ENCODE measurements at regions of chr7 and their contacts with region 1.

Region 1: DNA sequence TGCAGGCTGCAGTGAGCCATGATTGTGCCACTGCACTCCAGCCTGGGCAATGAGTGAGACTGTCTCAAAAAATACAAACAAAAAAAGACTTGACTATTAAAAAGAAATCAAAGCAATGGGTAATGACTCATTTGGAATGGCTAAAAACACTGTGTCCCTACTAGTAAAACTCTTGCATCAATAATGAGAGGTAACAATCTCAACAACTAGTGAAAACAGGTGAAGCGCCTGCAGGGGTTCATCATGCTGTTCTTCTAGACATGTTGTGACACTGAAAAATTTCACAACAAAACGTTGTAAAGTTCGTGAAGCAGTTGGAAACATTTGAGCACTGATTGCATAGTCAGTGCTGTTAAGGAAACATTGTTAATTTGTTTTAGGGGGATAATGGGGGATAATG is 26.9 kb upstream of the SLC29A4 start:
- DNase-seq: no peak
- H3K4me3 Mint-ChIP-seq: no peak overlapping the region
- H3K27ac Mint-ChIP-seq: no peak overlapping the region
- H3K4me1 Mint-ChIP-seq: no peaks in the 10 kb centered on the region
- H3K27me3 Mint-ChIP-seq: peaks cover 3% of the 10 kb centered on the region

Region 2: GRCh38 chr7:3922175-3922635 is 1333.6 kb before region 1 on chr7:
- CTCF ChIA-PET with region 1: no interaction called
- POLR2A ChIA-PET with region 1: interaction called, 13 read pairs
- DNase-seq: no peak
- H3K4me3 Mint-ChIP-seq: no peak overlapping the region
- H3K27ac Mint-ChIP-seq: no peak overlapping the region
- H3K4me1 Mint-ChIP-seq: peaks cover 6% of the 10 kb centered on the region
- H3K27me3 Mint-ChIP-seq: no peaks in the 10 kb centered on the region

Measured in activated CD4-positive, alpha-beta T cell treated with anti-CD3 and anti-CD28 coated beads, Interleukin-2, amount 10 ng/mL, durations not matched to agents 7 days and 5 days (primary cell).